Natural killer cell (primary cell): ENCODE measurements at regions of chr10 and their contacts with region 1.

Region 1: GRCh38 chr10:22630234-22631174 is 83.9 kb downstream of the PIP4K2A start:
- DNase-seq: peak in 1 of 2 donors; percentile 87
- ATAC-seq: peak; percentile 67 to 81 (median 73)
- H3K4me3 ChIP-seq: peak overlapping the region; percentile 25
- H3K4me3 Mint-ChIP-seq: peak overlapping the region; percentile 90
- H3K27ac ChIP-seq: peak overlapping the region; percentile 97
- H3K27ac Mint-ChIP-seq: peak overlapping the region; percentile 99
- H3K4me1 ChIP-seq: peaks cover 64% of the 10 kb centered on the region
- H3K4me1 Mint-ChIP-seq: peaks cover 94 to 96% of the 10 kb centered on the region in 2 donors
- H3K27me3 ChIP-seq: no peaks in the 10 kb centered on the region
- H3K27me3 Mint-ChIP-seq: no peaks in the 10 kb centered on the region
- CTCF ChIP-seq: no peak

Region 2: GRCh38 chr10:22335173-22336123 is 295.1 kb before region 1 on chr10:
- intact Hi-C with region 1: no loop called
- DNase-seq: peak; percentile 74 to 92
- ATAC-seq: peak; percentile 81 to 92 (median 84)
- H3K4me3 ChIP-seq: peak overlapping the region; percentile 53
- H3K4me3 Mint-ChIP-seq: peak overlapping the region; percentile 89
- H3K27ac ChIP-seq: peak overlapping the region; percentile 37
- H3K27ac Mint-ChIP-seq: peak overlapping the region; percentile 79 to 92
- H3K4me1 ChIP-seq: peaks cover 49% of the 10 kb centered on the region
- H3K4me1 Mint-ChIP-seq: peaks cover 31 to 39% of the 10 kb centered on the region in 2 donors
- H3K27me3 ChIP-seq: peaks cover 59% of the 10 kb centered on the region
- H3K27me3 Mint-ChIP-seq: peaks cover 28 to 30% of the 10 kb centered on the region in 2 donors
- CTCF ChIP-seq: no peak

Region 3: DNA sequence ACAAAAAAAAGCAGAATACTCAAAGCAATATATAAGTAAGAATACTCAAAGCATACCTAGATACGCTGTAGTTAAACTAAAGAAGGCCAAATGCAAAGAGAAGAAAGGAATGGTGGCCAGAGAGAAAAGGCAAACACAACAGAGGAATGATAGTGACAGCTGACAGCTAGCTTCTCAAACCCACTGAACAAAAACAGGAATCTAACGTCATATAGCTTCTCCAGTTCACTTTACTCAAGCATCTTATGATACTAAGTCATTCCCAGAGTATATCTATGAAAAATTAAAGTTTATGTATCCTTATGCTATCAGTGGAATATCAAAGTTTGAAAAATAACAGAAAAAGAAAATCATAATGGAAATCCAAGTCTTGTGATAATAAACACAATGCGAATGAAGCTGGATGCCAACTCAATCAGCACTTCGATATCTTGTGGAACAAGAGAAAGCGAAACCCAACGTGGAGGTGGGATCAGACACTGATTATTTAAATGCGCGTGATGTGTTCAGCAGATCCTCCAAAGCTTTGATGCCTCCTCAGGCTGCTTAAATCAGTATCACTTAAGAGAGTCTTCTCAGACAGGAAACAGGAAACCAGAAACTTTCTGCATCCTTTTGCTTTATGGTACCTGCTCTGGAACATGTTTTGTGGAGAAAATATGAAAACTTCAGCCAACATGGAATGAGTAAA is 18.9 kb before region 1 on chr10:
- intact Hi-C with region 1: loop called (anchors 2 kb)
- DNase-seq: peak in 1 of 2 donors; percentile 95
- ATAC-seq: peak; percentile 82 to 89 (median 87)
- H3K4me3 ChIP-seq: peak overlapping the region; percentile 22
- H3K4me3 Mint-ChIP-seq: peak overlapping the region; percentile 92
- H3K27ac ChIP-seq: peak overlapping the region; percentile 89
- H3K27ac Mint-ChIP-seq: peak overlapping the region; percentile 99
- H3K4me1 ChIP-seq: peaks cover 76% of the 10 kb centered on the region
- H3K4me1 Mint-ChIP-seq: peaks cover 92 to 96% of the 10 kb centered on the region in 2 donors
- H3K27me3 ChIP-seq: no peaks in the 10 kb centered on the region
- H3K27me3 Mint-ChIP-seq: no peaks in the 10 kb centered on the region
- CTCF ChIP-seq: no peak

Region 4: DNA sequence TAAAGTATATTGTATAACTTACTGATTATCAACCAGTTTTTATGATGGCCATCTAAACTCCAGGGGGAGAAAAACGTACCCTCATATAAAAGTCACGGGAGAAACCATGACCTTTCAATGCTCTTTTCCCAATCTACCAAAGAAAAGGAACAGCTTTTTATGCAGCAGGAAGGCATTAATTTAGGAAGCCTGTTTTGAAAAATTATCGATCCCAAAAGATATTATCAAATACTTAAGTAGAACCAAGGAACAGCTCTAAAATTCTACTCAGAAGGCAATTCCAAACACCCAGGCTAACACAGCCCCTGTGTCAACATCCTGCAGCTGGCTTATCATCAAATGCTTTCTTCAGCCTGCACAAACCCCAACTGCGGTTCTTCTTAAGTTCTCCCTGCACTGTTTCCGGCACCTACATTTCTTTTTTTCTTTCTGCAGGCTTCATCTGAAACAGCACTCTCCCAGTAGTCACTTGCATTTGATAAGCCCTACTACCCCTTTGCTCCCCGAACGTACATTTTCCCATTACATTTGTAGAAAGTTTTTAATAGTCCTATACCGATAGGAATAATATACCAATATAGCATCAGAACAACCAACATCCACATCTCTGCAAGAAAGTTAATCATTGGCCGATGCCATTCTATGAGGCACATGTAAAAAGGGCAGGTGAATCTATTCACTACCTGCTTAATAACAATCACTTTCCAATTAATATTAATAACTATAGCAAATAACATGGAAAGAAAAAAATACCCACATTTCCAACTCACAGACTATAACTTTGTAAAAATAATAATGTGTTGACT is 36.0 kb after region 1 on chr10:
- intact Hi-C with region 1: loop called (anchors 5 kb)
- DNase-seq: peak in 1 of 2 donors; percentile 91
- ATAC-seq: peak; percentile 78 to 89 (median 89)
- H3K4me3 ChIP-seq: peak overlapping the region; percentile 2
- H3K4me3 Mint-ChIP-seq: peak overlapping the region; percentile 87
- H3K27ac ChIP-seq: peak overlapping the region; percentile 38
- H3K27ac Mint-ChIP-seq: peak overlapping the region; percentile 81 to 99
- H3K4me1 ChIP-seq: peaks cover 35% of the 10 kb centered on the region
- H3K4me1 Mint-ChIP-seq: peaks cover 69 to 83% of the 10 kb centered on the region in 2 donors
- H3K27me3 ChIP-seq: no peaks in the 10 kb centered on the region
- H3K27me3 Mint-ChIP-seq: no peaks in the 10 kb centered on the region
- CTCF ChIP-seq: no peak

Region 5: GRCh38 chr10:22693371-22693784 is 62.9 kb after region 1 on chr10:
- intact Hi-C with region 1: no loop called
- DNase-seq: peak in 1 of 2 donors; percentile 48
- ATAC-seq: peak; percentile 89 to 93 (median 90)
- H3K4me3 ChIP-seq: no peak overlapping the region
- H3K4me3 Mint-ChIP-seq: peak overlapping the region; percentile 84
- H3K27ac ChIP-seq: peak overlapping the region; percentile 62
- H3K27ac Mint-ChIP-seq: peak overlapping the region; percentile 79 to 99
- H3K4me1 ChIP-seq: peaks cover 48% of the 10 kb centered on the region
- H3K4me1 Mint-ChIP-seq: peaks cover 76 to 84% of the 10 kb centered on the region in 2 donors
- H3K27me3 ChIP-seq: no peaks in the 10 kb centered on the region
- H3K27me3 Mint-ChIP-seq: no peaks in the 10 kb centered on the region
- CTCF ChIP-seq: no peak